ENCODE measurements at regions of chr19 and their contacts with region 1.

Region 1: GRCh38 chr19:46766569-46767317 is 20.5 kb upstream of the STRN4 start:
- DNase-seq: peak; percentile 74
- H3K4me3 ChIP-seq: no peak overlapping the region
- H3K27ac ChIP-seq: no peak overlapping the region
- H3K4me1 ChIP-seq: no peaks in the 10 kb centered on the region
- H3K27me3 ChIP-seq: no peaks in the 10 kb centered on the region
- CTCF ChIP-seq: peak; percentile 76
- EP300 ChIP-seq: no peak
- RAD21 ChIP-seq: peak; percentile 33

Region 2: GRCh38 chr19:46564701-46565100 is 202.0 kb before region 1 on chr19:
- CTCF ChIA-PET with region 1: no interaction called
- POLR2A ChIA-PET with region 1: no interaction called
- DNase-seq: no peak
- H3K4me3 ChIP-seq: no peak overlapping the region
- H3K27ac ChIP-seq: no peak overlapping the region
- H3K4me1 ChIP-seq: no peaks in the 10 kb centered on the region
- H3K27me3 ChIP-seq: no peaks in the 10 kb centered on the region
- CTCF ChIP-seq: no peak
- EP300 ChIP-seq: no peak
- RAD21 ChIP-seq: no peak

Region 3: DNA sequence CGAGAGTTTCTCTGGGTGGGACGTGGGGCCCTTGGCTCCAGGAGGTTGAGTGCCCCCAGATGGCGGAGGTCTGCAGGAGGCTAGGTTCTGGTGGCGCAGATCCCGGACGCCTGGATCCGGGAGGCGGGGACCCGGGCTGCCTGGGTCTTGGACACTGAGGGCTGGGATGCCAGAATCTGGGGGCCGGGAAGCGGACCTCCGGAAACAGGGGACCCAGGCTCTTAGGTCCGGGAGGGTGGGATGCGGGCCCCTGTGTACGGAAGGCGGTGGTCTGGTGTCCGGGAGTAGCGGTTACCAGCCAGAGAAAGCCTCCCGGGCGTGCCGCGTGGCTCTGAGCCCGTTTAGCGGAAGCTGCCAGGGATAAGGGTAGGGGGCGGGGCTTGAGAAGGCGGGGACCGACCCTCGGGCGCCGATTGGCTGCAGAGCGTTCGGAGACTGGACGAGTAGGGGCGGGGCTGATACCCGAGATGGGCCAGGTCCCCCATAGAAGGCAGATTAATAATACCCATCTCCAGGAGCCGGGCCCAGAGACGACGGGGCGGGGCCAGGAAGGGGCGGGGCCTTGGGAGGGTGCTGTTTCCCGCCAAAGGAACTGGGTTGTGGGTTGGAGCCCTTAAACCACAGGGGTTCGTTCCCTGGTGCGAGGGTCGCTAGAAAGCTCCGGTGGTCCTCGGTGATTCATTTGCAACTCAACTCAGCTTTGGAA is 21.7 kb after region 1 on chr19 and contains the start of gene SLC1A5:
- CTCF ChIA-PET with region 1: interaction called, 14 read pairs
- POLR2A ChIA-PET with region 1: no interaction called
- DNase-seq: peak; percentile 97
- H3K4me3 ChIP-seq: peak within 1 kb of the TSS; percentile 62 to 95
- H3K27ac ChIP-seq: peak within 1 kb of the TSS; percentile 87 to 92
- H3K4me1 ChIP-seq: peaks cover 16 to 36% of the 10 kb centered on the region in 2 experiments; a peak in 3 of 4 replicates
- H3K27me3 ChIP-seq: no peaks in the 10 kb centered on the region
- CTCF ChIP-seq: no peak
- EP300 ChIP-seq: no peak; a peak in 1 of 4 replicates
- RAD21 ChIP-seq: no peak
- polyA plus RNA-seq, gene SLC1A5: 76.7 and 80.4 TPM in 2 replicates

Measured in SK-N-SH (cell line).